ENCODE measurements at regions of chr19 and their contacts with region 1.

Region 1: DNA sequence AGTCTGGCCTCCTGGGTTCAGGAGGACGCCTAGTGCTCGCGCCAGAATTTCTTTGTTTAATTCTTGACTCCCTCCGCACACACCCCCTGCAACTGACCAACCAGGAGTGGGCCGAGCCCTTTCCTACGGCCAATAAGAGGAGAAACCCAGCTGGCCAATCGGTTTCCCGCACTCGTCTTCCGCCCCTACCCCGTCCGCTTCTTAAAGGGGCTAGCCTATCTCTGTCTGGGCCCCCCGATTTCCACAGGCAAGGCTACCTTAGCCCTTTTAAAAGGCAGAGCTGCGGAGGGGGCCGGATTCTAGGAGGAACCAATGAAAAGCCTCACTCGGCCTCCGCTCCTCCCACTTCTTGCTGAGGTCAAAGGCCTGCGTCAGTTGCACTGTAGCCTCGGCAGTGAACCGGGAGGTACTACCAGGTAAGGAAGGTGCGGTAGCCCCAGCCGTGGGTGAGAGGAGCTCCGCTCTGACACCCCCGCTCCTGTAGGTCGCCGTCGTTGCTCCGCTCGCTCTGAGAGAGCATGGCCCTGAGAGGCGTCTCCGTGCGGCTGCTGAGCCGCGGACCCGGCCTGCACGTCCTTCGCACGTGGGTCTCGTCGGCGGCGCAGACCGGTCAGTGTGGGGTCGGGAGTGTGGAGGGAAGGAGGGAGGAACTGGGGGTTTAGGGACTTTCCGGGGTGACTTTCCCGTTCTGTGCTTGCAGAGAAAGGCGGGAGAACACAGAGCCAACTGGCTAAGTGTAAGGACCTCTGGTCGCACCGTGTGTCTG is at the start of gene GCDH:
- DNase-seq: peak; percentile 98
- ATAC-seq: peak; percentile 91
- H3K4me3 ChIP-seq: peak within 1 kb of the TSS; percentile 51 to 92 (median 78)
- H3K4me3 Mint-ChIP-seq: peak within 1 kb of the TSS; percentile 99
- H3K27ac ChIP-seq: peak within 1 kb of the TSS; percentile 80 to 83
- H3K27ac Mint-ChIP-seq: peak within 1 kb of the TSS; percentile 95
- H3K4me1 ChIP-seq: peaks cover 15 to 20% of the 10 kb centered on the region in 2 donors
- H3K4me1 Mint-ChIP-seq: peaks cover 31% of the 10 kb centered on the region
- H3K27me3 ChIP-seq: no peaks in the 10 kb centered on the region
- H3K27me3 Mint-ChIP-seq: no peaks in the 10 kb centered on the region
- CTCF ChIP-seq: no peak
- total RNA-seq, gene GCDH: 61.2 and 63.2 TPM in 2 replicates

Region 2: DNA sequence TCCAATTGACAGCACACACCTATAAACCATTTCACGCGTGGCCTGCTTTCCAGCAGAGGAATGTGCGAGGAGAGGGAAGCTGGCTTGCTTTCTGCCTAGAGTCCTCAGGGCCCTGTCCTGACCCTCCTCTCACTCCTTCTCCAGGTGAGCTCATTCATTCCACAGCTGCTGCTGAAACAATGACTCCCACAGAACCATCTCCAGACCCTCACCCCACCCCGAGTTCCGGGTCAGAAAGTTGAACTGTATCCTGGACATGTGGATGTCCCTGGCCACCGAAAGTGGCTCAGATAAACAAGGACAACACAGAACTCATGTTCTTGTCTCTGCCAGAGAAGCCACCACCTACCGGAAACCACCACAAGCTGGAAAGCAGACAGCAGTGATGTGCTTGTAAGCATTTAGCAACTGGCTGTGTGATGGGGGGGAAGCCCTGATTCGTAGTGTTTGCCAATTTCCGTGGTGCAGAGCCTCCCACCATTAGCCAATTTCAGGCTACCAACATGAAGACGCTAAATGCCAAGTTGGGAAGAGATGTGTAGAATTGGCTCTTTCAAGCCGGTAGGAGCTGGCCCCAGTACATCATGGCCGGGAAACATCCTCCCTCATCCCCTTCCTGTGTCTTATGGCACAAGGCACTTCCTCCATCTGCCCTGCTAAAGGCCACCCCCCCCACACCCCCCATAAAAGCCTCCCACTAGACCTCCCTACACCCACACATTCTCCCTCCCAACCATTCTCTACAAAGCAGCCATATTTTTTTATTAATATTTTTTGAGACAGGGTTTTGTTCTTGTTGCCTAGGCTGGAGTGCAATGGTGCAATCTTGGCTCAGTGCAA is 23.1 kb after region 1 on chr19:
- CTCF ChIA-PET with region 1: interaction called, 5 read pairs
- POLR2A ChIA-PET with region 1: interaction called, 3 read pairs
- intact Hi-C with region 1: loop called (anchors 1 kb)
- DNase-seq: peak; percentile 50
- ATAC-seq: peak; percentile 52
- H3K4me3 ChIP-seq: no peak overlapping the region
- H3K4me3 Mint-ChIP-seq: peak overlapping the region; percentile 48
- H3K27ac ChIP-seq: no peak overlapping the region
- H3K27ac Mint-ChIP-seq: peak overlapping the region; percentile 67
- H3K4me1 ChIP-seq: peaks cover 9 to 25% of the 10 kb centered on the region in 2 donors
- H3K4me1 Mint-ChIP-seq: peaks cover 17% of the 10 kb centered on the region
- H3K27me3 ChIP-seq: no peaks in the 10 kb centered on the region
- H3K27me3 Mint-ChIP-seq: no peaks in the 10 kb centered on the region
- CTCF ChIP-seq: no peak

Region 3: GRCh38 chr19:13012690-13013608 is 122.0 kb after region 1 on chr19:
- CTCF ChIA-PET with region 1: no interaction called
- POLR2A ChIA-PET with region 1: no interaction called
- intact Hi-C with region 1: no loop called
- DNase-seq: peak; percentile 70
- ATAC-seq: peak; percentile 49
- H3K4me3 ChIP-seq: peak overlapping the region in 4 of 5 experiments; percentile 23 to 71 (median 55)
- H3K4me3 Mint-ChIP-seq: peak overlapping the region; percentile 92
- H3K27ac ChIP-seq: no peak overlapping the region
- H3K27ac Mint-ChIP-seq: peak overlapping the region; percentile 63
- H3K4me1 ChIP-seq: peaks cover 35 to 49% of the 10 kb centered on the region in 2 donors
- H3K4me1 Mint-ChIP-seq: peaks cover 38% of the 10 kb centered on the region
- H3K27me3 ChIP-seq: peaks cover 0 to 72% (median 38%) of the 10 kb centered on the region in 4 experiments
- H3K27me3 Mint-ChIP-seq: peaks cover 65% of the 10 kb centered on the region
- CTCF ChIP-seq: no peak